Cardiac septum (tissue), 1 donor: ENCODE measurements at regions of chr2 and their contacts with region 1.

Region 1: GRCh38 chr2:72289283-72289682 is 141.6 kb upstream of the CYP26B1 start:
- DNase-seq: no peak

Region 2: DNA sequence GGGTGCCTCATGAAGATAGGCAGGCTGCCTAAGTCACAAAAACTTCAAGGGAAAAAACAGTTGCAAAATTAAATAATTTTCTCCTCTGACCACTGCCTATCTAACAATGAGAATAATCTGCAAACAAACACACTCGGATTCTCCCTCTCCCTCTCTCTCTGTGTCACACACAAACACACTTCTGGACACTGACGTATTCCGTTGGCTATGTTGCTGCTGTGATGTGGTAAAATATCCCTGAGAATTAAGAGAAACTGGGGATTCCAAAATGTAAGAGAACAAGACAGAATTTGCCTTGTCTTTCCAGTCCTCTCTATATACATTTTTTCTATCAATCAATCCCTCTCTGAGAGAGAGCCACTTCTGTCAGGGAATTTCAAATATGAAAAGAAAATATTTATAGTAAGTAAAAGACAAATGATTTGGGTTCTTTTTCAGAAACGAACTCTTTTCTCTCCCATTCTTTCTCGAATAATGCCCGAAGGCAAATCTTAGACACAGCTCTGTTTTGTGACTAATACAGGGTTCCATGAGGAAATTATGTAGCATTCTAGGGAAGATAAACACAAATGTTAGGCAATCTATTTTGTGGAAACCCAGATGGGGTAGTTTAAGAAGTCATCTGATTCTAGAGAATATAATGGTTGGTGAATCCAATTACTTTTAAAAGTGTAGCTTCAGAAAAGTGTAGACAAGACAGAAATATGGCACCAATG is 168.7 kb after region 1 on chr2:
- intact Hi-C with region 1: loop called (anchors 10 kb)
- DNase-seq: no peak